ENCODE measurements at regions of chr6 and their contacts with region 1.

Region 1: DNA sequence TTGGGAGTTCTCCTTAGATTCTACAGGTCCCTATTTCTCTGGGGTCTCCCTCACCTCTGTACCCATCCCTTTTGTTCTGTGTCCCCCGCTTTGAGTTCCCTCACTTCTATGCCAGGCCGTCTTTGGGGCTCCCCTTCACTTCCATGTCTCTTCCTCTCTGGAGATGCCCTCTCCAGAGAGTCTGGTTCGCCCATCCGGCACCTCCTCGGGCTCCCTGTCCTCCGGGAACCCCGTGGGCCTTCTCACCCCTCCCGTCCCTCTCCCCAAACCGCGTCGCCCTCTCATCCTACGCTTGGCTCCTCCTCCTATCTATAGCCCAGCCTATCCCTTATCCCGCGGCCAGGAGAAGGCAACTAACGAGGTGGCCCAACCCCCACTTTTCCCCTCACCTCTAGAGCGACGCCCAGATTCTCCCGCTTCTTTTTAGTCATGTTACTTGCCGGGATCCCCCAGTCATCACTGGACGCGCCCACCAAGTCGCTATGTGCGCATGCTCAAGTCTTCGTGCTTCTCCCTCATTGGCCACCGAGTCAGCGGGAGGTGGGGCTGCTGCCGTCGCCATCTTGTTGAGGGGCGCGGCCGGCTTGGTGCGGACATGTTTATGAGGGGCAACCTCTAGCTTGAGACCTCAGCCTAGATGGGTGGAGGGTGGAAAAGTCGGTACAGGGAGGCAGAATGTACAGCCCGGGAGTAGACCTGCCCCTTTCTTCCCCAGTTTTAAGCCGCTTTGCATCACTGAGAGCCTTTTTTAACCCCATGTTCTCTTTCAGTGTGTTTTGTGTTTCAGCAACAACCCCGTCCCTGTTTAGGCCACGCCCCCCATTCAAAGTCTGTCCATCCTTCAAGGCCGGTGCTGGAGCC is at the start of gene CCDC167:
- DNase-seq: peak; percentile 90 to 98 (median 96)
- ATAC-seq: peak; percentile 69
- H3K4me3 ChIP-seq: peak within 1 kb of the TSS; percentile 86 to 94
- H3K4me3 Mint-ChIP-seq: peak within 1 kb of the TSS; percentile 98
- H3K27ac ChIP-seq: peak within 1 kb of the TSS; percentile 59 to 77
- H3K27ac Mint-ChIP-seq: peak within 1 kb of the TSS; percentile 96
- H3K4me1 ChIP-seq: peaks cover 64% of the 10 kb centered on the region
- H3K4me1 Mint-ChIP-seq: peaks cover 74% of the 10 kb centered on the region
- H3K27me3 ChIP-seq: no peaks in the 10 kb centered on the region
- H3K27me3 Mint-ChIP-seq: no peaks in the 10 kb centered on the region
- CTCF ChIP-seq: no peak
- total RNA-seq, gene CCDC167: 5.4 to 6.2 TPM

Region 2: GRCh38 chr6:37257634-37258404 is 241.8 kb before region 1 on chr6 and contains the starts of genes TBC1D22B and TMEM217:
- CTCF ChIA-PET with region 1: no interaction called
- POLR2A ChIA-PET with region 1: no interaction called
- intact Hi-C with region 1: loop called in 1 of 2 experiments (anchors 5 kb)
- DNase-seq: peak; percentile 89 to 97 (median 95)
- ATAC-seq: peak; percentile 99
- H3K4me3 ChIP-seq: peak within 1 kb of the TSS; percentile 93 to 100
- H3K4me3 Mint-ChIP-seq: peak within 1 kb of the TSS; percentile 92
- H3K27ac ChIP-seq: peak within 1 kb of the TSS; percentile 74 to 94
- H3K27ac Mint-ChIP-seq: peak within 1 kb of the TSS; percentile 85
- H3K4me1 ChIP-seq: peaks cover 24% of the 10 kb centered on the region
- H3K4me1 Mint-ChIP-seq: peaks cover 40% of the 10 kb centered on the region
- H3K27me3 ChIP-seq: no peaks in the 10 kb centered on the region
- H3K27me3 Mint-ChIP-seq: no peaks in the 10 kb centered on the region
- CTCF ChIP-seq: no peak
- total RNA-seq, gene TBC1D22B: 6.7 to 6.8 TPM
- total RNA-seq, gene TMEM217: 0.27 to 1.2 TPM

Region 3: GRCh38 chr6:37475173-37475572 is 24.5 kb before region 1 on chr6:
- CTCF ChIA-PET with region 1: no interaction called
- POLR2A ChIA-PET with region 1: no interaction called
- intact Hi-C with region 1: no loop called
- DNase-seq: no peak
- ATAC-seq: no peak
- H3K4me3 ChIP-seq: no peak overlapping the region
- H3K4me3 Mint-ChIP-seq: no peak overlapping the region
- H3K27ac ChIP-seq: no peak overlapping the region
- H3K27ac Mint-ChIP-seq: no peak overlapping the region
- H3K4me1 ChIP-seq: no peaks in the 10 kb centered on the region
- H3K4me1 Mint-ChIP-seq: no peaks in the 10 kb centered on the region
- H3K27me3 ChIP-seq: no peaks in the 10 kb centered on the region
- H3K27me3 Mint-ChIP-seq: no peaks in the 10 kb centered on the region
- CTCF ChIP-seq: no peak

Region 4: GRCh38 chr6:37516076-37516919 is 16.6 kb after region 1 on chr6:
- CTCF ChIA-PET with region 1: interaction called, 65 read pairs
- POLR2A ChIA-PET with region 1: interaction called, 207 read pairs
- intact Hi-C with region 1: loop called (anchors 1 kb)
- DNase-seq: peak; percentile 76 to 99 (median 90)
- ATAC-seq: peak; percentile 80
- H3K4me3 ChIP-seq: peak overlapping the region; percentile 35 to 52
- H3K4me3 Mint-ChIP-seq: peak overlapping the region; percentile 88
- H3K27ac ChIP-seq: peak overlapping the region; percentile 80 to 94
- H3K27ac Mint-ChIP-seq: peak overlapping the region; percentile 99
- H3K4me1 ChIP-seq: peaks cover 85% of the 10 kb centered on the region
- H3K4me1 Mint-ChIP-seq: peaks cover 80% of the 10 kb centered on the region
- H3K27me3 ChIP-seq: no peaks in the 10 kb centered on the region
- H3K27me3 Mint-ChIP-seq: no peaks in the 10 kb centered on the region
- CTCF ChIP-seq: no peak

Region 5: DNA sequence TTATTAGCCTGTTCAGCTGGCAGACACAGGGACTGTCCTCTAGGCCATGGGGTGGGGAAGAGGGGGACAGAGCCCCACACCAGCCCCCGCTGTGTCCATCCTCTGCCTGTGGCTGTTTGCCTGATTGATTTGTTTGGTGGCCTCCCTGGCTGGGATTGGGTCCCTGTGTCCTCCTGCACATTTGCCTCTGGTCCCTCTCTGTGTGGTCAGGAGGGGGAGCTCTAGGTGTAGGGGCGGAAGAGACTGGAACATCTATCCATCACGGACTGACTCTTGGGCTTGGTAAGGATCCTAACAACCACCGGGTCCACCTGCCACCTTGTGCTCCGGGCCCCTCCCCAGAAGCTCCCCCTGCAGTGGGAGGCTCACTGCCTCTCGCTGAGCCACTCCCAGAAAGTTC is 38.4 kb after region 1 on chr6:
- CTCF ChIA-PET with region 1: interaction called, 3 read pairs
- POLR2A ChIA-PET with region 1: interaction called, 7 read pairs
- intact Hi-C with region 1: loop called in 1 of 2 experiments (anchors 5 kb)
- DNase-seq: peak in 1 of 9 experiments; percentile 28
- ATAC-seq: no peak
- H3K4me3 ChIP-seq: no peak overlapping the region
- H3K4me3 Mint-ChIP-seq: no peak overlapping the region
- H3K27ac ChIP-seq: no peak overlapping the region
- H3K27ac Mint-ChIP-seq: peak overlapping the region; percentile 84
- H3K4me1 ChIP-seq: peaks cover 7% of the 10 kb centered on the region
- H3K4me1 Mint-ChIP-seq: peaks cover 22% of the 10 kb centered on the region
- H3K27me3 ChIP-seq: no peaks in the 10 kb centered on the region
- H3K27me3 Mint-ChIP-seq: no peaks in the 10 kb centered on the region
- CTCF ChIP-seq: no peak

Region 6: DNA sequence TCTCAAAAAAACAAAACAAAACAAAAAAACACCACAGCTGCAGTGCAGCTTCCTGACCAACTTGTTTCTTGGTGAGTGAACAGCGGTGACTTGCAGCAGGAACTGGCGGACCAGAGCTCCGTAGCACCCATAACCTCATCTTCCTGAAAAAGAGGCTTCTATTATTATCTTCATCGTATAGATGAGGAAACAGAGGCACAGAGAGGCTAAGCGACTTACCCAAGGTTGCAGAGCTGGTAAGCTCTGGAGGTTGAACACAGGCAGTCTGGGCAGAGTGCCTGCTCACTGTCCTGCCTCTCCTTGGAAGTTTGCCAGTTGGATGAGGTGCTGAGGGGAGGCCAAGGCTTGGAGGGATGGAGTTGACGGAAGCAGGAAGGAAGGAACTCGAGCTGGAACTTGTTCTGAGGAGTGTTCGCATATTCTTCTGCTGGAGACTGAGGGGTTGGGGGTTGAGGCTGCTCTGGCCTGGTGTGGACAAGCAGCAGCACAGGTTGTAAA is 48.0 kb after region 1 on chr6:
- CTCF ChIA-PET with region 1: interaction called, 4 read pairs
- POLR2A ChIA-PET with region 1: interaction called, 20 read pairs
- intact Hi-C with region 1: no loop called
- DNase-seq: peak in 4 of 9 experiments; percentile 17 to 68 (median 55)
- ATAC-seq: peak; percentile 46
- H3K4me3 ChIP-seq: no peak overlapping the region
- H3K4me3 Mint-ChIP-seq: peak overlapping the region; percentile 51
- H3K27ac ChIP-seq: peak overlapping the region in 1 of 2 experiments; percentile 72
- H3K27ac Mint-ChIP-seq: peak overlapping the region; percentile 80
- H3K4me1 ChIP-seq: peaks cover 17% of the 10 kb centered on the region
- H3K4me1 Mint-ChIP-seq: peaks cover 45% of the 10 kb centered on the region
- H3K27me3 ChIP-seq: no peaks in the 10 kb centered on the region
- H3K27me3 Mint-ChIP-seq: no peaks in the 10 kb centered on the region
- CTCF ChIP-seq: no peak

Region 7: DNA sequence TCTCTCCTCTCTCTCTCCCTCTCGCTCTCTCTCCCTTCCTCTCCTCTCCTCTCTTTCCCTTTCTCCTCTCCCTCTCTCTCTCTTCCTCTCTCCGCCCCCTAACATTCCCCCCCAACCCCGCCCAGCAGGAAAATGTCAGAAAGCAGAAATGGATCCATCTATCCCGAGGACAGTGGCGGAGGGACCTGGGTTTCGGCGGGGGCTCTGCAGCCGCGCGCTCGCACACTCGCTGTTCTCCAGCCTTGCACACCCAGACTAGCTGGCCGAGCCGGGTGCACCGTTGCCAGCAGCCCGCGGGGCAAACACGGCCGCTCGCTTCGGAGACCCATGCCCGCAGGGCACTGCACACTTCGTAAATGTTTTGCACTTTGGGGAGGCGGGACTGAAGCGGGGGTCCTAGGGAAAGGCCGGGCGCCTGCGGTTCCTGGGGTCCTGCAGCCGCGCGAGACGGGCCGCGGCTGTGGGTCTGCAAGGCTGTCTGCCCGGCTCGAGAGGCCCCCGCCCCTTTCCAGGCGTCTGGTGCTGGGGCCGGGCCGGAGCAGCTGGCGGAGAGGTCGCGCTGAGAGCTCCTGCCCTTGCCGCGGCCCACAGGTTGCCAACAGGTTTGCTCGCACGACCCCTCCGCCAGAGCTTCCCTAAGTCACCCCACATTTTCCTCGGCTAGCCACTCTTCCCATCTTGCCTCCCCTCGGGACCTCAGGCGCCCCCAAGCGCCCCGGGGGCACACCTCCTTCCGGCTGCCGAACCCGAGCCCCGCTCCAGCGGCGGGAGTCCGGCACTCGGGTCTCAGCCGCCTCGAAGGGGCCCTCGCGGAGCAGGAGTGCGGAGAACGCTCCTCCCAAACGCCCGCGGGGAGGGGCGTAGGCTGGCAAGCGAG is 198.8 kb after region 1 on chr6:
- CTCF ChIA-PET with region 1: no interaction called
- POLR2A ChIA-PET with region 1: interaction called, 6 read pairs
- intact Hi-C with region 1: loop called in 1 of 2 experiments (anchors 1 kb)
- DNase-seq: peak; percentile 31 to 86 (median 67)
- ATAC-seq: peak; percentile 29
- H3K4me3 ChIP-seq: peak overlapping the region; percentile 80 to 84
- H3K4me3 Mint-ChIP-seq: peak overlapping the region; percentile 99
- H3K27ac ChIP-seq: peak overlapping the region in 1 of 2 experiments; percentile 85
- H3K27ac Mint-ChIP-seq: peak overlapping the region; percentile 97
- H3K4me1 ChIP-seq: peaks cover 11% of the 10 kb centered on the region
- H3K4me1 Mint-ChIP-seq: peaks cover 18% of the 10 kb centered on the region
- H3K27me3 ChIP-seq: peaks cover 9 to 25% of the 10 kb centered on the region in 2 experiments
- H3K27me3 Mint-ChIP-seq: peaks cover 31% of the 10 kb centered on the region
- CTCF ChIP-seq: no peak